Testis (tissue), 5 donors: ENCODE measurements at regions of chr1 and their contacts with region 1.

Region 1: GRCh38 chr1:244864253-244865027 is at the start of gene HNRNPU:
- DNase-seq: peak; percentile 98
- H3K4me3 ChIP-seq: peak within 1 kb of the TSS; percentile 88 to 91
- H3K27ac ChIP-seq: peak within 1 kb of the TSS; percentile 99 to 100
- H3K4me1 ChIP-seq: peaks cover 13% of the 10 kb centered on the region
- H3K27me3 ChIP-seq: no peaks in the 10 kb centered on the region
- CTCF ChIP-seq: peak; percentile 18 to 68 (median 57)
- POLR2A ChIP-seq: peak; percentile 97
- total RNA-seq, gene HNRNPU: 378 to 467 TPM

Region 2: GRCh38 chr1:244821134-244821533 is 43.3 kb before region 1 on chr1:
- intact Hi-C with region 1: no loop called
- DNase-seq: no peak
- H3K4me3 ChIP-seq: no peak overlapping the region
- H3K27ac ChIP-seq: no peak overlapping the region
- H3K4me1 ChIP-seq: no peaks in the 10 kb centered on the region
- H3K27me3 ChIP-seq: no peaks in the 10 kb centered on the region
- CTCF ChIP-seq: no peak
- POLR2A ChIP-seq: no peak

Region 3: GRCh38 chr1:244835276-244836134 is 28.9 kb before region 1 on chr1 and contains the start of gene COX20:
- intact Hi-C with region 1: loop called (anchors 2 kb)
- DNase-seq: peak; percentile 92
- H3K4me3 ChIP-seq: peak within 1 kb of the TSS; percentile 84 to 91
- H3K27ac ChIP-seq: peak within 1 kb of the TSS; percentile 98 to 99
- H3K4me1 ChIP-seq: peaks cover 5% of the 10 kb centered on the region
- H3K27me3 ChIP-seq: no peaks in the 10 kb centered on the region
- CTCF ChIP-seq: no peak
- POLR2A ChIP-seq: peak; percentile 25
- total RNA-seq, gene COX20: 41.6 to 60.6 TPM

Region 4: GRCh38 chr1:244970661-244971551 is 106.5 kb after region 1 on chr1:
- intact Hi-C with region 1: loop called (anchors 2 kb)
- DNase-seq: peak; percentile 94
- H3K4me3 ChIP-seq: peak overlapping the region; percentile 68 to 82
- H3K27ac ChIP-seq: peak overlapping the region; percentile 99 to 100
- H3K4me1 ChIP-seq: peaks cover 15% of the 10 kb centered on the region
- H3K27me3 ChIP-seq: no peaks in the 10 kb centered on the region
- CTCF ChIP-seq: peak; percentile 24 to 76 (median 42)
- POLR2A ChIP-seq: no peak